Endothelial cell of umbilical vein (primary cell): ENCODE measurements at regions of chr2 and their contacts with region 1.

Region 1: DNA sequence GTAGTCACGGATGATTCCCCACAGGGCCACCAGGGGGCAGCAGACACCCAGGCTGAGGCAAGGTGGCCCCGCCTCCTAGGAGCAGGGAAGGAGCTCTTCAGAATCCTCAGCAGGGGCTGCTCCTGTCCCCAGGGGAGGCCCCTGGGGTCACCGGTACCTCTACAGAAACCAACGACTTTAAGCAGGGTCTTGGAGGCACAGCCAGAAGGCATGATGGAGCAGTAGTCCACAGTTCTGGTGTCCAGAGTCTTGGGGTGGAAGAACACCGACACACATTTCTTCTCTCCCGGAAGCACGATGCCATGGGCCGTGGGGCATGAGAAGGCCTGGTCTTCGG is 11.5 kb downstream of the CFAP65 start:
- DNase-seq: peak; percentile 64
- H3K4me3 ChIP-seq: no peak overlapping the region
- H3K27ac ChIP-seq: no peak overlapping the region
- H3K4me1 ChIP-seq: no peaks in the 10 kb centered on the region
- H3K27me3 ChIP-seq: peaks cover 13 to 14% of the 10 kb centered on the region in 2 experiments
- CTCF ChIP-seq: peak; percentile 85 to 97
- POLR2A ChIP-seq: no peak

Region 2: DNA sequence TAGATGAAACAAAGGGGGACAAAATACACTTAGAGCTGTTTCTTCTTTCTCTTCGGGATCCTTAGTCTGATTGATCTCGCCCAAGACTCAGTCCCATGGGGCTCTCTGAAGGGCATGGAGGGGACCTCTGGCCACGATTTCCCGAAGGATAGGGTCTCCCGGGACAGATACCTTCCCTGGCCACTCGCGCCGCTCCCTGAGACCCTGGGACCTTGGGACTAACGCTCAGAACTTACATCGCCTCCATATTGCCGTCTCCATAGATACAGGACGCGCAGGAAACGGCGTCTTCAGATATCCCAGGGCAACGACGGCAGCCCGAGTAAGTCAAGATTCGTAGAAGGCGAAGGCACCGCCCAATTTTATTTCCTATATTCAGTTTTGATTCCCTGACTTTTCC is 11.5 kb after region 1 on chr2 and contains the start of gene CFAP65:
- CTCF ChIA-PET with region 1: interaction called, 52 read pairs
- POLR2A ChIA-PET with region 1: no interaction called
- dilution Hi-C with region 1: no loop called
- intact Hi-C with region 1: no loop called
- DNase-seq: peak; percentile 40
- H3K4me3 ChIP-seq: peak within 1 kb of the TSS in 1 of 3 experiments; percentile 21
- H3K27ac ChIP-seq: no peak within 1 kb of the TSS
- H3K4me1 ChIP-seq: no peaks in the 10 kb centered on the region
- H3K27me3 ChIP-seq: peaks cover 18 to 22% of the 10 kb centered on the region in 2 experiments
- CTCF ChIP-seq: no peak
- POLR2A ChIP-seq: no peak
- total RNA-seq, gene CFAP65: not detected in 2 replicates

Region 3: GRCh38 chr2:219073413-219074129 is 43.8 kb after region 1 on chr2:
- CTCF ChIA-PET with region 1: interaction called, 32 read pairs
- POLR2A ChIA-PET with region 1: no interaction called
- dilution Hi-C with region 1: no loop called
- intact Hi-C with region 1: no loop called
- DNase-seq: peak; percentile 23
- H3K4me3 ChIP-seq: no peak overlapping the region
- H3K27ac ChIP-seq: no peak overlapping the region
- H3K4me1 ChIP-seq: no peaks in the 10 kb centered on the region
- H3K27me3 ChIP-seq: no peaks in the 10 kb centered on the region
- CTCF ChIP-seq: peak; percentile 60 to 65
- POLR2A ChIP-seq: no peak

Region 4: DNA sequence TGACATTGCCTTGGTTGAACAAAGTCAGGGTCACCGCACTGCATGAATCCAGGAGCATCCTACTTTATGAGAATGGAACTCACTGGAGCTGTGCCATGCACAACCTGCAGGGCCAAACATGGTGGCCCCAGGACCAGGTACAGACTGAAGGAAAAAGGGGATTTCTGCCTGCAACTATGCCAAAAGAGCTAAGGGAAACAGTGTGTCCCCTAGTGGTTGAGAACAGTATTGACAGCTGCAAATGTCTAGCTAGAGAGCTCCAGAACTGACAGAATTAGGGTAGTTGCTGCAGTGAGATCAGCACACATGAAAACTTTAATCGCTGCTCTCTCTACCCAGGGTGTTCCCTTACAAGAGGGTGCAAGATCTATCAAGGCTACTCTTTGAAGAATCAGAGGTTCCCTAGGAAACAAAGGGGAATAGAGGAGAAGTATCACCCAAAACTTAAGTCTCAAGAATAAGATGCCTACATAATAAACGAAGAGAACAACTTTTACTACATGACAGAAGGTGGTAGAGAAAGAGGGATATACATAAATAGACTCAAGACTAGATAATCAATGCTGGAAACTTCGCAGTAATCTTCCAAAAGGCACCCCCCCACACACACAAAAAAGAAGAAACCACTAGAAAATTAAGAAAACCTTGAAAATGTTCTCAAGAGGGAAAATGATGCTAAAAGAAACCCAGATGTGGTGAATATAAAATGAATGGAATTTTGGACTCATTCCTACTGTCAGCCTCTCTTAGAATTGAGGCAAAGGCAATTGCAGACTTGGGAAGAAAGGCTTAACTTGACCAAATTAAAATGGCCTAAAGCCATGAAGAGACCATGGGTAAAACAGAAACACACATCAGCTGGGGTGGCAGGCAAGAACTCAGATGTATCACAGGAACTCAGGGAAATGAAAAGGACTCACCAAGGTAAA is 74.6 kb after region 1 on chr2:
- CTCF ChIA-PET with region 1: interaction called, 37 read pairs
- POLR2A ChIA-PET with region 1: no interaction called
- dilution Hi-C with region 1: no loop called
- intact Hi-C with region 1: no loop called
- DNase-seq: peak; percentile 35
- H3K4me3 ChIP-seq: no peak overlapping the region
- H3K27ac ChIP-seq: no peak overlapping the region
- H3K4me1 ChIP-seq: no peaks in the 10 kb centered on the region
- H3K27me3 ChIP-seq: no peaks in the 10 kb centered on the region
- CTCF ChIP-seq: peak; percentile 84 to 86
- POLR2A ChIP-seq: no peak

Region 5: DNA sequence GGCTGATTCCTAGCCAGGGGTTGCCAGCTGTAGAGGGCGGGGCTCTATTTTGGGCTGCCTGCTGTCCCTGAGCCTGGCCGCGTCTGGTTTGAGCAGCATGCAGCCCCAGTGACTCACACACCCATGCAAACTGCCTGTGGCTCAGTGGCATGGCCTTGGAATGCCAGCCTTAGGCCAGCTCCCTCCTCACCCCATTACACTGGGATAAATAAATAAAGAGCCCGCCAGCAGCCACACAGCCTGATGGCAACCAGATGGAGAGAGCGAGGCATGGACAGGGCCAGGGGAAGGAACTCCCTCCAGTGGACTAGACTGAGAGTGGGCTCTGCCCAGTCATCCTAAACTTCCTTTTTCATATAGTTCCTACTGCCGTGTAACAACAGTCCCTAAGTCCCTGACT is 112.5 kb after region 1 on chr2:
- CTCF ChIA-PET with region 1: interaction called, 14 read pairs
- POLR2A ChIA-PET with region 1: no interaction called
- dilution Hi-C with region 1: no loop called
- intact Hi-C with region 1: no loop called
- DNase-seq: no peak
- H3K4me3 ChIP-seq: no peak overlapping the region
- H3K27ac ChIP-seq: no peak overlapping the region
- H3K4me1 ChIP-seq: no peaks in the 10 kb centered on the region
- H3K27me3 ChIP-seq: no peaks in the 10 kb centered on the region
- CTCF ChIP-seq: no peak
- POLR2A ChIP-seq: no peak

Region 6: DNA sequence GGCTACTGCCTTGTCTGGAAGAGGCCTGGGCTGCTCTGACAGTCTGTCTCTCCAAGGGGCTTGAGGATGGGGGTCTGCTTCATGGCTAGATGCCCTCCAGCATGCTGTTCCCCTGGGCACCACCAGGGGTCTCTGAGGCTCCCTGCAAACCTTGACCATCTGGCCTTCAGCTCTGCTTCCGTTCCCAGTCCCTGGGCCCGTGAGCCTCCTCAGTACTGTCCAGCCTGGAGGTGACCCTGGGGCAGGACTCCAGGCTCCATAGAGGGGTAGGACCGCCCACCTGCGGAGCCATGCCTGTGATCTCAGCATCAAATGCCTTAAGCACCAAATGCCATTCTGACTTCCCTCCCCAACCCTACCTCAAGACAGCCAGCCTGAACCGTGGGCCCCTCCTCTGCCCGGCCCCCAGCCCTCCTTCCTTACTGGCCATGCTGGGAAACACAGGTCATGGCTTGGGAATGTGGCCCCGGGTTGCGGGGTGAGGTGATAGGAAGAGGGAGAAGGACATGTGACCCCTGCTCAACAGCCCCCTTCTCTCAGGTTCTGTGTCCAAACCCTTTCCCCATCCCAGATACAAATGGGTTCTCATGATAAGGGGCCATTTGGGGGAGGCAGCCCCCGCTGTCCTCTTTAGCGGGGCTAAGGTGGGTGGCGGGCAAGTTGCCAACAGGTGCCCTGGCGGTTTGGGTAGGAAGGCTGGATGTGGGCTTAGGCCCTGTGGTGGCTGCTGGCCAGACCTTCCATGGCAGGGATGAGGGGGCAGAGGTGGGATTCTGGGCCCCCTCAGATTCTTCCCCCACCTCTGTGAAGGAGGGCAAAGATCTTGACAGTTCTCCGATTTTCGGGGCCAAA is 429.9 kb after region 1 on chr2:
- CTCF ChIA-PET with region 1: no interaction called
- POLR2A ChIA-PET with region 1: no interaction called
- dilution Hi-C with region 1: no loop called
- intact Hi-C with region 1: no loop called
- DNase-seq: peak; percentile 38
- H3K4me3 ChIP-seq: no peak overlapping the region
- H3K27ac ChIP-seq: no peak overlapping the region
- H3K4me1 ChIP-seq: no peaks in the 10 kb centered on the region
- H3K27me3 ChIP-seq: no peaks in the 10 kb centered on the region
- CTCF ChIP-seq: peak; percentile 79 to 95
- POLR2A ChIP-seq: no peak